T-cell (primary cell): ENCODE measurements at regions of chr12 and their contacts with region 1.

Region 1: DNA sequence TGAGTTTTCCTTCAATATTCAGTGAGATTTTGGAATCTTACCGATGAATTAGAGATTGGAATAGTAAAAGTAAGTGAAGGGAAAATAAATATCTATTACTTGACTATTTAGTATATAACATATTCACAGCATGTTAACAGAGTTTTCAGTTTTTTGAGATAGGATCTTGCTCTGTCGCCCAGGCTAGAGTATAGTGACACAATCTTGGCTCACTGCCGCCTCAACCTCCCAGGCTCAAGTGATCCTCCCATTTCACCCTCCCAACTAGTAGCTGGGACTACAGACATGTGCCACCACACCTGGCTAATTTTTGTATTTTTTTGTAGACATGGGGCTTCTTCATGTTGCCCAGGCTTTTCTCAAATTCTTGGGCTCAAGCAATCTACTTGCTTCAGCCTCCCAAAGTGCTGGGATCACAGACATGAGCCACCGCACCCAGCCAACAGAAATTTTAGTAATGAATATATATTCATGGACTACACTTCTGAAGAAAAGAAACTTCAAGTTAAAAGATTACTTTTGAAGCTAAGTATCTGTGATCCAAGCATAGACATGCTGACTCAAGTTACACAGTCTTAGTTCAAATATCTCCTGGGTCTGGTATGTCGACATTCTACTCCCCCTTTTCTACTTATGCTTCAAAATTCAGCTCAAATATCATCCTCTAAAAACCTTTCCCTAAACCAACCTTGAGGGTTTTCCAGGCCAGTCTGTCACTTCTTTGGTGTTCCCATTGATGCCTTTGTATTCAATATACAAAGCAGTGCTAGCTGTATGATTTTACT is 13.8 kb downstream of the UBE2N start:
- DNase-seq: no peak
- ATAC-seq: no peak
- H3K4me3 ChIP-seq: no peak overlapping the region
- H3K4me3 Mint-ChIP-seq: peak overlapping the region in 2 of 3 donors; percentile 7 to 53
- H3K27ac ChIP-seq: no peak overlapping the region
- H3K27ac Mint-ChIP-seq: peak overlapping the region; percentile 81 to 85
- H3K4me1 ChIP-seq: peaks cover 30 to 47% of the 10 kb centered on the region in 2 experiments
- H3K4me1 Mint-ChIP-seq: peaks cover 87 to 90% (median 89%) of the 10 kb centered on the region in 3 donors
- H3K27me3 ChIP-seq: no peaks in the 10 kb centered on the region
- H3K27me3 Mint-ChIP-seq: no peaks in the 10 kb centered on the region

Region 2: DNA sequence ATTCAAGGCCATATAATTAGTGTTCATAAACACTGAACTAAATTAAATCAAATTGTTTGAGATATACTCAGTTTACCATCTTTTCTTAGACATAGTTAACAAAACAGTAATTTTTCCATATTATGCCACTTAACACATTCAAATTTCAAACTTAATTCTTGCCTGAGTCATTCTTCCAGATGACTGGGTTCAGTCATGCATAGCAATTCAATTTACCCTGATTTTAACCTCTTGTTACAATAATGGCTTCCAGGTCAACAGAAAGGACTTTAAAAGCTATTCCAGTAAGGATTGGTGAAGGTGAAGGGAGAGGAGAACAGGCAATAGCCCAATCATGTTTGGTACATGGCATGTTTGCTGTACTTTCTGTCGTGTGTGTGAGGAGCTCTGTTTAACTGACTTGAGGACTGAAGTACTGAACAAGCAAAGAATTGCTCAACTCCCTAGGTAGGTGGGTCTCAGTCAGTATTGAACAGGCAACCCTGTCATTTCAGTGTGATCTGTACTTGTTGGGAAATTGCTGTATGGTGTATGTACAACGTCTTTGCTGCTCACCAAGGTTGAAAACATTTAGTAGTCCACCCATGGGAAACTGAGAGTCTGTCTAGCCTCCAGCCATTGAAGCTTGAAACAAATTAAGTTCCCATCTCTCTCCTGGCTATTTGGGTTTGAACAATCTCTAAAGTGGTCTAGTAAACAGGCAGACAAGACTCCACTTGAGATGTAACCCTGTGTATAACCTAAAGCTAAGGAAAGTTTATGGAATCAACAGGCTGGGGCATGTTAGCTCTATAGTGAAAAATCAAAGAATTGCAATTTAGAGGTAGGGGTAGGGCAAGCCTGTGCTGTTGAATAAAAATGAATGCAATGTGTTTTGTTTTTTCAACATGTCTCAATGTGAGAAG is 1609.5 kb before region 1 on chr12:
- CTCF ChIA-PET with region 1: no interaction called
- POLR2A ChIA-PET with region 1: no interaction called
- DNase-seq: no peak
- ATAC-seq: no peak
- H3K4me3 ChIP-seq: no peak overlapping the region
- H3K4me3 Mint-ChIP-seq: no peak overlapping the region
- H3K27ac ChIP-seq: no peak overlapping the region
- H3K27ac Mint-ChIP-seq: peak overlapping the region in 1 of 2 donors; percentile 0
- H3K4me1 ChIP-seq: peaks cover 0 to 2% of the 10 kb centered on the region in 2 experiments
- H3K4me1 Mint-ChIP-seq: peaks cover 3 to 19% (median 11%) of the 10 kb centered on the region in 3 donors
- H3K27me3 ChIP-seq: no peaks in the 10 kb centered on the region
- H3K27me3 Mint-ChIP-seq: no peaks in the 10 kb centered on the region

Region 3: GRCh38 chr12:93710574-93710926 is 282.6 kb after region 1 on chr12:
- CTCF ChIA-PET with region 1: interaction called in 1 of 2 experiments, 10 read pairs
- POLR2A ChIA-PET with region 1: no interaction called
- DNase-seq: no peak
- ATAC-seq: no peak
- H3K4me3 ChIP-seq: no peak overlapping the region
- H3K4me3 Mint-ChIP-seq: no peak overlapping the region
- H3K27ac ChIP-seq: no peak overlapping the region
- H3K27ac Mint-ChIP-seq: no peak overlapping the region
- H3K4me1 ChIP-seq: no peaks in the 10 kb centered on the region
- H3K4me1 Mint-ChIP-seq: peaks cover 6 to 10% (median 6%) of the 10 kb centered on the region in 3 donors
- H3K27me3 ChIP-seq: no peaks in the 10 kb centered on the region
- H3K27me3 Mint-ChIP-seq: no peaks in the 10 kb centered on the region